ENCODE measurements at regions of chr10 and their contacts with region 1.

Region 1: DNA sequence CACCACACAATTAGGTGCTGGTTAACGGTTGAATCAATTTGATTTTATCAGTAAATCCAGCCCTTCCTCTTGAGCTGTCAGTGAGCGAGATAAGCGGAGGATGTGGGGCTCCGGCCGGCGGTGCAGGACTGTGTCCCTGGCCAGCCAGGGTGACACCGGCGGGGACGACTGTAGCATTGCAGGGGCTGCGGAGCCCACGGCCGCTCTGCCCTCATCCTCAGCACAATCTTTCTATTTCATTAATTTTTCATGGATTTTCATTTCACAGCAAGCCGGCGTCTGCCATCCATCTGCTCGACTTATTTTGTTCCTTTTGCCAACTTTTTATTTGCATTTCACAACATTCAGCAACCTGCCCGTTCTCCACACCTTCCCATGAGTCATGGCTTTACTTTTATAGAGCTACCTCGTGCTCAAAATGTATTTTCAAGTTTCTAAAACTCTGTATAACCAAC is 4.7 kb downstream of the ADARB2 start:
- DNase-seq: no peak
- ATAC-seq: no peak
- H3K4me3 ChIP-seq: no peak overlapping the region
- H3K27ac ChIP-seq: no peak overlapping the region
- H3K4me1 ChIP-seq: no peaks in the 10 kb centered on the region
- H3K27me3 ChIP-seq: peaks cover 7 to 45% of the 10 kb centered on the region in 2 experiments
- CTCF ChIP-seq: no peak
- EP300 ChIP-seq: no peak
- POLR2A ChIP-seq: no peak
- RAD21 ChIP-seq: no peak

Region 2: DNA sequence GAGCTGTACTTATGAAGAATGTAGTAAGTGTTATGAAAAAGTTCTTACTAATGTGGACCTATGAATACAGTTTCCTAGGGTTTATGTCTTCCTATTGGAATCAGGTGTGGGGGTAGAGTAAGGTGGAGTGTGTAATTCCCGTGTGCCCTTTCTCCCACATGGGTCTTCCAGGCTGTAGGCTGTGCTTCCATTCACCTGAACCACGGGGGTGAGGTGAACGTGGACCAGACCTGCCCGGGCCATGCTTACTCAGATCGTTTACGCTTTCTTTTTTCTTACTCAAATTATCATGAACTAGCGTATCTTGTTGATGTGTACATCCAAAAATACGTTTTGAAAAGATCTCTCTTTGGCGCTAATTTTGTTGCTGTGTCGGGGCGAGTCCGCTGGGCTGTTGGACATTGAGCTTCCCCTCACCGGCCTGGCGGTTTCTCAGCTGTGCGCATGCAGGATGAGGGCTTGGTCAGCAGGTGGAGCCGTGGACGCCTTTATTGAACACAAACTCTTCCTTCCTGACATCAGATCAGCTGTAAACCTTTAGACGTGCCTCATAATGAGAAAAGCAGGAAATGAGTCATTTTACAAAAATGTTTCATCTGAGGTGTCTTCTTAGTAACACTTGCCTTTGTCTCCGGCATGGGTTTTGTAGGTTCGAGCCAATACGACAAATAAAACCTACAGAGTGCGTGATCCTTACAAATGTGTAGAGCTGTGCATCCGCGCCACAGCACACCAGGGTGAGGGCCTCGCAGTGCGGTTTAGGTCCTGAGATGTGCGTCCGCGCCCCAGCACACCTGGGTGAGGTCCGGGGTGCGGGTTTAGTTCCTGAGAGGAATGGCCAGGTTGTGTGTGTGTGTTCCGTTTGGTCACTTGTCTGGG is 622.6 kb before region 1 on chr10:
- CTCF ChIA-PET with region 1: no interaction called
- POLR2A ChIA-PET with region 1: no interaction called
- in situ Hi-C with region 1: no loop called
- intact Hi-C with region 1: loop called (anchors 5 kb)
- DNase-seq: peak; percentile 73
- ATAC-seq: peak; percentile 97
- H3K4me3 ChIP-seq: no peak overlapping the region
- H3K27ac ChIP-seq: no peak overlapping the region
- H3K4me1 ChIP-seq: peaks cover 12% of the 10 kb centered on the region; the same call in 1 of the 2 replicates
- H3K27me3 ChIP-seq: no peaks in the 10 kb centered on the region
- CTCF ChIP-seq: peak; percentile 86
- EP300 ChIP-seq: no peak
- POLR2A ChIP-seq: no peak
- RAD21 ChIP-seq: 0 out of 2 replicates have a peak, but pooled peaks have one; percentile 50

Region 3: GRCh38 chr10:1643161-1643907 is 89.3 kb before region 1 on chr10:
- CTCF ChIA-PET with region 1: no interaction called
- POLR2A ChIA-PET with region 1: no interaction called
- in situ Hi-C with region 1: no loop called
- intact Hi-C with region 1: no loop called
- DNase-seq: peak; percentile 5
- ATAC-seq: peak; percentile 41; the same call in 1 of the 3 replicates
- H3K4me3 ChIP-seq: no peak overlapping the region
- H3K27ac ChIP-seq: no peak overlapping the region
- H3K4me1 ChIP-seq: no peaks in the 10 kb centered on the region
- H3K27me3 ChIP-seq: no peaks in the 10 kb centered on the region; a peak in 1 of 5 replicates
- CTCF ChIP-seq: no peak
- EP300 ChIP-seq: no peak
- POLR2A ChIP-seq: no peak
- RAD21 ChIP-seq: no peak

Region 4: GRCh38 chr10:2005546-2005945 is 273.0 kb after region 1 on chr10:
- CTCF ChIA-PET with region 1: no interaction called
- POLR2A ChIA-PET with region 1: no interaction called
- in situ Hi-C with region 1: no loop called
- intact Hi-C with region 1: no loop called
- DNase-seq: no peak
- ATAC-seq: no peak
- H3K4me3 ChIP-seq: no peak overlapping the region
- H3K27ac ChIP-seq: no peak overlapping the region
- H3K4me1 ChIP-seq: no peaks in the 10 kb centered on the region
- H3K27me3 ChIP-seq: no peaks in the 10 kb centered on the region
- CTCF ChIP-seq: no peak
- EP300 ChIP-seq: no peak
- POLR2A ChIP-seq: no peak
- RAD21 ChIP-seq: no peak